ENCODE measurements at regions of chr12 and their contacts with region 1.

Region 1: DNA sequence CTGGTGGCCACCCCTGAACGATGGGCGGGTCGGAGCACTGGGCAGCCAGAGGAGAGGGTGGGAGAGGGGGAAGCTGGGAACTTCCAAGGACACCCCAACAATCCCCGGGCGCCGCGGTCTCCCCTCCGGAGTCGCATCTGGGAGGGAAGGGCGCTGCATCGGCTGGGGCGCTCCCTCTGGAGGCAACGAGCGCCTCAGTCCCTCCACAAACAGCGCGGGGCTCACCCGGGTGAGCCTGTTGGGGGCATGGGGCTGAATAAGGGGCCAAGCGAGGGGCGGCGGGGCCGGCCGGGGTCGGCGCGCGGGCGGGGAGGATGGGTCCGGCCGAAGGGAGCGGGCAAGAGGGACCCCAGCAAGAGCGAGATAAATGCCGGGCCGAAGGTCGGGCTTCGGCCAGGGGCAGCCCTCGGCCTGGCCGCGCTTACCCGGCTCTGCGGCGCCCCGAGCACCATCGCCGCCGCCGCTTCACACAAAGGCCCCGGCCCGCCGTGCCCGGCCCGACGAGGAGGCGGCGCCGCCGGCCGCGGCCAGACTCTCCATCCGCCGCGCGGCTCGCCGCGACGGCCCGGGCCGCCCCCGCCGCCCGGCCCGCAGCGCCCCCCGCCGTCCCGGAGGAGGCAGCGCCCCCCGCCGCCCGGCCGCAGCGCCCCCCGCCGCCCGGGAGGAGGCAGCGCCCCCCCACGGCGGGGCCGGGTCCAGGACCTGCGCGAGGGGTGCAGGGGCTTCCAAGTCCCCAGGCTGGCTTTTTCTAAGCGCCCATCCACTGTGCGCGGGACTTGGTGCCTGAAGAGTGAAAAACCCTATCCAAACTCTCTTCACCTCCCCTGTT is at the start of gene ZBTB39:
- DNase-seq: peak; percentile 80
- ATAC-seq: peak; percentile 69
- H3K4me3 Mint-ChIP-seq: peak within 1 kb of the TSS; percentile 79
- H3K27ac Mint-ChIP-seq: peak within 1 kb of the TSS; percentile 78
- H3K4me1 Mint-ChIP-seq: peaks cover 64% of the 10 kb centered on the region
- H3K27me3 Mint-ChIP-seq: no peaks in the 10 kb centered on the region
- total RNA-seq, gene ZBTB39: 6.4 to 6.6 TPM

Region 2: DNA sequence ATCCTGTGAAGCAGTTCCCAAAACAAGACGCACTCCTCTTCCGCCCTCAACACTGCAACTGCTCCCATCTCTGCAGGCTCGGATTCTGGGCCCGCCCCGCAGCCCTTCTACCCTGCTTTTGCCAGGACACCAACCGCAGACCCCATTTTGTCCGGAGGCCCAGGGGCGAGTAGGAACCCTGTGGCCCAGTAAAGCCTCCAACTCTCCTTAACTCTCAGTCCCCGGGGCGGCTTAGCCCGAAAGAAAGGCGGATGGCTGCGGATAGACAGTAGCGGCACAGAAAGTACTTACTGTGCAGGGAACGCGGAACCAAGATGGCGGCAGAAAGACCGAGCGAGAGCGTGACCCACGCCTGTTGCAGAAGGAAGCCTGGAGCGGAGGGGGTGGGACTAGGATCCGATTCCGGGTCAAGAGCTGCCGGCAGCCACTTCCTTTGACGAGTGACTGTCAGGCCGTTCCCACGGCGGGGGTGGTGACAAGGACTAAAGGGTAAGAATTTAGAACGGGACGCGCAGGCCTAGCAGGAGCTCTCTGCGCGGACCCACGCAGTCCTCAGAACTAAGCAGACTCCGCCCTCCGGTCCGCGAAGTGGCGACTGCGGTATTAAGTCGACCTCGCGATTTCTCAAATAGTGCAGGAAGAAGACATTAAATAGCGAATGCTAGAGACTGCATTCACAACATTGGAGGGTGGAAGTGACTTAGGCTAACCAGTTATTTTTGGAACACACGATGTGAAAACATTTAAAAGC is 281.0 kb before region 1 on chr12 and contains the start of gene NACA:
- CTCF ChIA-PET with region 1: interaction called, 4 read pairs
- POLR2A ChIA-PET with region 1: no interaction called
- intact Hi-C with region 1: loop called in 1 of 2 experiments (anchors 1 kb)
- DNase-seq: peak; percentile 99
- ATAC-seq: peak; percentile 96
- H3K4me3 Mint-ChIP-seq: peak within 1 kb of the TSS; percentile 97
- H3K27ac Mint-ChIP-seq: peak within 1 kb of the TSS; percentile 99
- H3K4me1 Mint-ChIP-seq: peaks cover 44% of the 10 kb centered on the region
- H3K27me3 Mint-ChIP-seq: no peaks in the 10 kb centered on the region
- total RNA-seq, gene NACA: 1,215 to 1,231 TPM

Region 3: GRCh38 chr12:56839915-56840325 is 166.3 kb before region 1 on chr12:
- CTCF ChIA-PET with region 1: interaction called, 10 read pairs
- POLR2A ChIA-PET with region 1: no interaction called
- intact Hi-C with region 1: no loop called
- DNase-seq: peak; percentile 66
- ATAC-seq: no peak
- H3K4me3 Mint-ChIP-seq: no peak overlapping the region
- H3K27ac Mint-ChIP-seq: no peak overlapping the region
- H3K4me1 Mint-ChIP-seq: peaks cover 16% of the 10 kb centered on the region
- H3K27me3 Mint-ChIP-seq: no peaks in the 10 kb centered on the region

Region 4: GRCh38 chr12:57031138-57031725 is 25.0 kb after region 1 on chr12:
- CTCF ChIA-PET with region 1: interaction called, 17 read pairs
- POLR2A ChIA-PET with region 1: no interaction called
- intact Hi-C with region 1: no loop called
- DNase-seq: peak; percentile 44
- ATAC-seq: peak; percentile 43
- H3K4me3 Mint-ChIP-seq: no peak overlapping the region
- H3K27ac Mint-ChIP-seq: peak overlapping the region; percentile 55
- H3K4me1 Mint-ChIP-seq: peaks cover 46% of the 10 kb centered on the region
- H3K27me3 Mint-ChIP-seq: no peaks in the 10 kb centered on the region

Region 5: DNA sequence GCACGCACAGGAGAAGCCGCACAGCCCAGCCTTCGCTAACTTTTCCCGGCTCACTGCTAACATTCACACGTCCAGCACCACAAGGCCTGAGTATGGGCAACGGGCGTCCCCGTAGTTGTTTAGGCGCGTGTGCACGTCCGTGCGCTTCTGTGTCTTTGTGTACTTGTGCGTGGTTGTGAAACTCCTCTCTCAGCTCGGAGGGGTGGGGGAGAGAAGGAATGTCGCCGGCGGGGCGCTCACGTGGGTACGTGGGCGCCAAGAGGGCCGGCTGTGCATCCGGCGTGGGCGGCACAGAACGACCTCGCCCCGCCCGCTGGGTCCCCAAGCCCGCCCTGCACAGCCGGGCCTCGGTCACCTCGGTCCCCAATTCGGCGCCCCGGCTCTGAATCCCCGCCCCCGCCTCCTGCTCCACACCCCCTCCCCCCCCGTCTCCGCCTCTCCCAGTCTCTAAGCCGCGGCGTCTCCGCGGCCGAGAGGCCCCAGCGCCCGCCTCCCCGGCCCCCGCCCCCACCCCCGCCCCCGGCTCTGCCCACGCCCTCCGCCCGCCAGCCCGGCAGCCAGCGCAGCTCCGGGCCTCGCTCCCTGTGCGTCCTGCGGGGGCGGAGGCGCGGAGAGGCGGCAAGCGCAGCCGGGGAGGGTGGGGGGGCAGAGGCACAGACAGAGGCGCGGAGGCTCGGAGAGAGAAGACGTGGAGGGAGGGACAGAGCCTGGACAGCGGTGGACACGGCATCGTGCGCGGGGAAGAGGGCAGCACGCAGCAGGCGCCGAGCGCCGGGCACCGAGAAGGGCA is 82.5 kb after region 1 on chr12 and contains the start of gene NAB2:
- CTCF ChIA-PET with region 1: interaction called, 6 read pairs
- POLR2A ChIA-PET with region 1: no interaction called
- intact Hi-C with region 1: loop called in 1 of 2 experiments (anchors 1 kb)
- DNase-seq: peak; percentile 95
- ATAC-seq: peak; percentile 49
- H3K4me3 Mint-ChIP-seq: peak within 1 kb of the TSS; percentile 93
- H3K27ac Mint-ChIP-seq: peak within 1 kb of the TSS; percentile 95
- H3K4me1 Mint-ChIP-seq: peaks cover 63% of the 10 kb centered on the region
- H3K27me3 Mint-ChIP-seq: no peaks in the 10 kb centered on the region
- total RNA-seq, gene NAB2: 46.8 to 48.6 TPM

Measured in activated CD4-positive, alpha-beta T cell treated with anti-CD3 and anti-CD28 coated beads for 36 hours (primary cell).